Heart right ventricle (tissue), 16 donors: ENCODE measurements at regions of chr5 and their contacts with region 1.

Region 1: GRCh38 chr5:15003511-15003920 is 131.9 kb upstream of the ANKH start:
- DNase-seq: peak; percentile 27 to 75
- ATAC-seq: peak; percentile 82 to 93 (median 88)
- H3K4me3 ChIP-seq: no peak overlapping the region
- H3K27ac ChIP-seq: no peak overlapping the region
- H3K4me1 ChIP-seq: peaks cover 4 to 52% (median 37%) of the 10 kb centered on the region in 9 donors
- H3K27me3 ChIP-seq: no peaks in the 10 kb centered on the region
- CTCF ChIP-seq: peak; percentile 62 to 94 (median 83)

Region 2: DNA sequence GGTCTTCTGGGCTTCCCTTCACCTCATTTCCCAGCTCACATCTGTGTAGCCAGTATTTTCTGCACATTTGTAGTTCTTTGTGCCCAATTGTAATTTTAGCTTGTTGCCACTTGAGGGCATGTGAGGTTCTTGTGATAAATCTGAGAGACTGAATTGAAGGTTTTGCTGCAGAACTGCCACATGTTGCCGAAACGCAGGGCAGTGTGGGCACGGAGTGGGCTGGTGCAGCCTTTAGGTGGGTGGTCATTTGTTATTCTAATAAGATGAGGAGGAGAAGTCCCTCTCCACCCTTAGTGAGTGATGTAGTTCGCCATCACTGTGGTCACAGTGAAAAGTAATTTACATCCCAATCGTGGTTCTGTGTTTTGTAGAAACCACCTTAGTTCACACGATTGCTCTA is 317.8 kb before region 1 on chr5:
- intact Hi-C with region 1: loop called in 2 of 10 experiments (anchors 5 to 10 kb)
- DNase-seq: peak in 1 of 2 donors; percentile 41
- ATAC-seq: peak; percentile 16 to 43 (median 38)
- H3K4me3 ChIP-seq: no peak overlapping the region
- H3K27ac ChIP-seq: peak overlapping the region in 7 of 10 donors; percentile 33 to 87 (median 70)
- H3K4me1 ChIP-seq: peaks cover 0 to 66% (median 20%) of the 10 kb centered on the region in 9 donors
- H3K27me3 ChIP-seq: no peaks in the 10 kb centered on the region
- CTCF ChIP-seq: peak in 8 of 9 donors; percentile 30 to 75 (median 68)

Region 3: GRCh38 chr5:14727428-14727865 is 276.1 kb before region 1 on chr5:
- intact Hi-C with region 1: loop called in 9 of 10 experiments (anchors 1 to 5 kb)
- DNase-seq: peak; percentile 80 to 84
- ATAC-seq: peak; percentile 49 to 86 (median 74)
- H3K4me3 ChIP-seq: no peak overlapping the region
- H3K27ac ChIP-seq: peak overlapping the region in 5 of 10 donors; percentile 12 to 64 (median 39)
- H3K4me1 ChIP-seq: peaks cover 6 to 57% (median 22%) of the 10 kb centered on the region in 9 donors
- H3K27me3 ChIP-seq: no peaks in the 10 kb centered on the region
- CTCF ChIP-seq: peak; percentile 91 to 98 (median 96)

Region 4: DNA sequence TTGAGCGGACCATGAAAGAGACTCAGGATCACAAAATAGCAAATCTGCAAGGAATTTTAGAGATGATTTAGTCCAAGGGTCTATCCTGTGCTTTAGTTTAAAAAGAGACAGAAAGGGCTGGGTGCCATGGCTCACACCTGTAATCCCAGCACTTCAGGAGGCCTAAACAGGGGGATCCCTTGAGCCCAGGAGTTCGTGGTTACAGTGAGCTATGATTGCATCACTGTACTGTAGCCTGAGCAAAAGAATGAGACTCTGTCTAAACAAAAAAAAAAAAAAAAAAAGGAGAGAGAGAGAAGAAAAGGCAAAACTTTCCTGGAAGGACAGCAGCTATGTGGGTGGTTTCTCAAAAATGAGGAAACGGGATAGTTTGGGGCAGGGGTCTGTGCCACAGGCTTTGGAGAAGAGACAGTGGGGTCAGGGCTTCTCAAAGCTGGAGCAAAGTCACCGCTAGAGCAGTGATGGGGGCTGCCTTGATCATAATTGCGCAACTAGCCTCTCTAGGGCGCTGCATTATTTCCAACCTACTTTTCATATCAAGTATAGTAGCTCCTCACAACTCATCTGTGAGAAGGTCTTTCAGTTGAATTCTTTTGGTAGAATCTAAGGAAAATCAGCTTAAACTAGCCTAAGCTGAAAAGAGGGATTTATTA is 123.5 kb before region 1 on chr5:
- intact Hi-C with region 1: loop called in 3 of 10 experiments (anchors 5 to 10 kb)
- DNase-seq: no peak
- ATAC-seq: no peak
- H3K4me3 ChIP-seq: no peak overlapping the region
- H3K27ac ChIP-seq: no peak overlapping the region
- H3K4me1 ChIP-seq: peaks cover 0 to 55% (median 29%) of the 10 kb centered on the region in 9 donors
- H3K27me3 ChIP-seq: no peaks in the 10 kb centered on the region
- CTCF ChIP-seq: no peak

Region 5: GRCh38 chr5:14937254-14937653 is 66.3 kb before region 1 on chr5:
- intact Hi-C with region 1: loop called in 2 of 10 experiments (anchors 5 kb)
- DNase-seq: no peak
- ATAC-seq: peak in 7 of 8 donors; percentile 61 to 88 (median 71)
- H3K4me3 ChIP-seq: no peak overlapping the region
- H3K27ac ChIP-seq: peak overlapping the region in 7 of 10 donors; percentile 14 to 69 (median 36)
- H3K4me1 ChIP-seq: peaks cover 0 to 30% (median 6%) of the 10 kb centered on the region in 9 donors
- H3K27me3 ChIP-seq: no peaks in the 10 kb centered on the region
- CTCF ChIP-seq: no peak

Region 6: GRCh38 chr5:14946815-14947640 is 56.5 kb before region 1 on chr5:
- intact Hi-C with region 1: loop called in 5 of 10 experiments (anchors 5 kb)
- DNase-seq: peak in 1 of 2 donors; percentile 28
- ATAC-seq: peak; percentile 55 to 82 (median 66)
- H3K4me3 ChIP-seq: no peak overlapping the region
- H3K27ac ChIP-seq: no peak overlapping the region
- H3K4me1 ChIP-seq: peaks cover 0 to 13% (median 8%) of the 10 kb centered on the region in 9 donors
- H3K27me3 ChIP-seq: no peaks in the 10 kb centered on the region
- CTCF ChIP-seq: peak in 8 of 9 donors; percentile 18 to 64 (median 50)

Region 7: DNA sequence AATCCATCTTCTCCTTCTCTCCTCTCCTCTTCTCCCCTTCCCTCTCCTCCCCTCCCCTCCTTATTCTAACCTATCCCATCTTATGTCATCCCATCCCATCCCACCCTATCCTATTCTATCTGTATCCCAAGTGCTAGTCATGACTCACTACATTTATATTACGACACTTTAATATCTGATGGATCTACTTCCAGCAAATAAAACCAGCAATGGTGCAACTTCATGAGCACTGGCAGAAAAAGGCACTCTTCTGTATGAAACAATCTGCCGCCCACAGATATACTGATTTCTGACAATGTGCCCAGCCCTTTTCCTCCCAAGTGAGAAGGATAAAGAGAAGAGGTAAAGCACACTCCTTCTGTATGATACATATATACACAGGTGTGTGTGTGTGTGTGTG is 45.3 kb before region 1 on chr5:
- intact Hi-C with region 1: loop called in 3 of 10 experiments (anchors 5 kb)
- DNase-seq: no peak
- ATAC-seq: no peak
- H3K4me3 ChIP-seq: no peak overlapping the region
- H3K27ac ChIP-seq: no peak overlapping the region
- H3K4me1 ChIP-seq: peaks cover 0 to 13% (median 3%) of the 10 kb centered on the region in 9 donors
- H3K27me3 ChIP-seq: no peaks in the 10 kb centered on the region
- CTCF ChIP-seq: no peak